Posterior vena cava (tissue), 2 donors: ENCODE measurements at regions of chr21 and their contacts with region 1.

Region 1: GRCh38 chr21:15064576-15065391 is at the start of gene NRIP1:
- DNase-seq: peak; percentile 98
- total RNA-seq, gene NRIP1: 27.3 to 40.5 TPM

Region 2: DNA sequence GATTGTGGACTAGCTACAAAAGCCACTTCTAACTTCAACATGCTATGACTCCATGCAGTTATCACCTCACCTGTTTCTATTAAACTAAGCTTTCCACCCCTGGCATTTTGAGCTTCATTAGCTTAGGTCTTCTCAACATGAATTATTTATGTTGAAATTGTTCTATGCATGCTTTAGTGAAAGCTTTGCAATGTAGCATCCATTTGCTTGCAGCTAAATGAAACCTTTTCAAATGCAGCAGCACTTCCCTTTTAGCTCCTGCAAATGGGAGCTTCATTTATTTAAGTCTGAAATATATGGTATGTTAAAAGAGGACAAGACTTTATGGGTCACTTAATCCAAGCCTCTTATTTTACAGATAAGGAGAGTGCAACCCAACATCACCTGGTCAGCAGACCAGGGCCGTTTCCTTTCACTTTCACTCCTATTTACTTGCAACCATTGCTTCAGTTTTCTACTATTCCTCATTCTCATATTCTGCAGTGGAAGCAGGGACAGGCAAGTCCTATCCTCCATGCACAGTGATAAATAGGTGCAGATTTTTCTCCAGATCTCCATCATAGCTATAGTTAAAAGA is 462.3 kb before region 1 on chr21:
- intact Hi-C with region 1: no loop called
- DNase-seq: no peak

Region 3: GRCh38 chr21:14968821-14969220 is 96.0 kb before region 1 on chr21:
- intact Hi-C with region 1: no loop called
- DNase-seq: no peak

Region 4: GRCh38 chr21:15112858-15113257 is 48.1 kb after region 1 on chr21:
- intact Hi-C with region 1: loop called in 1 of 2 experiments (anchors 2 kb)
- DNase-seq: no peak

Region 5: DNA sequence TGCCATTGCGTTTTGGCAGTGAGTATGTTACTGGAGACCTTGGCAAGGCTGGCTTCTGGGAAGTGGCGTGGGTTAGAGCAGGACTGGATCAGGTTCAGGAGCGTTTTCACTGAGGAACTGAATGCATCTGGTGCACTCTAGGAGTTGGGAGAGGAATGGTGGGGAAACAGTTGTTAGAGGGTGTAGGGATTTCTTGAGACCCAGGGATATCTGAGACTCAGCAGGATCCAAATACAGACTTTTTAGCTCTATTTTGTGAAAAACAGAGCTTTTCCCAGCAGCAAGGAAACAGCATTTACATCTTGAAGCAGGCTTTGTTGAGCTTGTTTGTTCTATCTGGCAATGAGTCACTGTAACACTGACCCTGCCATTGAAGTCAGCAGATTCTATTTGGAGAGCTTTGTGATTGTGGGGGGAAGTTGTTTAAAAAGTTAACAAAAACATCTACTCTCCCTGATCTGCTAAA is 56.9 kb after region 1 on chr21:
- intact Hi-C with region 1: loop called in 1 of 2 experiments (anchors 10 kb)
- DNase-seq: no peak